Thyroid gland (tissue), 4 donors: ENCODE measurements at regions of chr11 and their contacts with region 1.

Region 1: GRCh38 chr11:47941907-47942558 is 38.3 kb upstream of the PTPRJ start:
- DNase-seq: peak in 1 of 2 donors; percentile 17
- H3K4me3 ChIP-seq: no peak overlapping the region
- H3K27ac ChIP-seq: no peak overlapping the region
- H3K4me1 ChIP-seq: peaks cover 31 to 46% of the 10 kb centered on the region in 2 donors
- H3K27me3 ChIP-seq: no peaks in the 10 kb centered on the region
- CTCF ChIP-seq: no peak
- POLR2A ChIP-seq: no peak

Region 2: DNA sequence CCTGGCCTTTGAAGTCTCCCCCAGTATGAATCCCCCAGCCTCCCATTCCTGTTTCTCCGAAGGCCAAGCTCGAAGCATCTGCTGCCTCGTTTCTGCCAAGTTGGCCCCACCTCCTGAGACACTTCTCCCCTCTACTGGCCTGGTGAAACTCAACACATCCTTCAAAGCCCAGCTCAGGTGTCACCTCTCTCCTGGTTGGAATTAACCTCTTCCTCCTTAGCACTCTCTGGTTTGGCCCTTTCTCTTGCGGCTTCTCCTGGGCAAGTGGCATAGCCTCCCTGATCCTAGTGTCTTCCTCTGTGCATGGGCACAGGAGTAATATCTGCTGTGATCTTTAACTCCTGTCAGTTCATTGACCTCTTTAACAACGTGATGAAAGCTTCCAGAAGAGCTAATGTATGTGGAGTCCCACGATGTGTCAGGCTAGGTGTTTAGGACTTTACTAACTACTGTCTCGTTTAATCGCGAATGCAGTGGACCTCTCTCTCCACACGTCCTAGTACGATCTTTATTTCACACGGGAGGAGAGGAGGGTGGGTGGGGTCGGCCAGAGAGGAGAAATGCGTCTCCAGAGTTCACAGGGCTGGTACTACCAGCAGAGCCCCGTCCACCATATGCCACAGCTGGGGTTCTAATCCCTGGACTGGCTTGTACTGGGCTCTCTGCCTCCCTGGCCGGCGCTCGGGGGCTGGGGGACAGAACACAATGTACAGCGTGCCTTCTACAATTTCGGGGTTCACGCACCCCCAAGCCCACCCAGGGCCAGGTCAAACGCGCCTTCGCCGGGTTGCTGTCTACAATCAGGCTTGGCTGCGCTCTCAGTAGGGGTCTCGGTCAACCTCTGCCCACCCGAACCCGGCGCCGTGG is 37.6 kb after region 1 on chr11:
- intact Hi-C with region 1: loop called (anchors 5 kb)
- DNase-seq: peak; percentile 63 to 64
- H3K4me3 ChIP-seq: peak overlapping the region in 2 of 3 donors; percentile 12 to 85
- H3K27ac ChIP-seq: peak overlapping the region; percentile 97 to 99 (median 98)
- H3K4me1 ChIP-seq: peaks cover 38 to 44% of the 10 kb centered on the region in 2 donors
- H3K27me3 ChIP-seq: no peaks in the 10 kb centered on the region
- CTCF ChIP-seq: no peak
- POLR2A ChIP-seq: peak in 1 of 2 donors; percentile 40

Region 3: DNA sequence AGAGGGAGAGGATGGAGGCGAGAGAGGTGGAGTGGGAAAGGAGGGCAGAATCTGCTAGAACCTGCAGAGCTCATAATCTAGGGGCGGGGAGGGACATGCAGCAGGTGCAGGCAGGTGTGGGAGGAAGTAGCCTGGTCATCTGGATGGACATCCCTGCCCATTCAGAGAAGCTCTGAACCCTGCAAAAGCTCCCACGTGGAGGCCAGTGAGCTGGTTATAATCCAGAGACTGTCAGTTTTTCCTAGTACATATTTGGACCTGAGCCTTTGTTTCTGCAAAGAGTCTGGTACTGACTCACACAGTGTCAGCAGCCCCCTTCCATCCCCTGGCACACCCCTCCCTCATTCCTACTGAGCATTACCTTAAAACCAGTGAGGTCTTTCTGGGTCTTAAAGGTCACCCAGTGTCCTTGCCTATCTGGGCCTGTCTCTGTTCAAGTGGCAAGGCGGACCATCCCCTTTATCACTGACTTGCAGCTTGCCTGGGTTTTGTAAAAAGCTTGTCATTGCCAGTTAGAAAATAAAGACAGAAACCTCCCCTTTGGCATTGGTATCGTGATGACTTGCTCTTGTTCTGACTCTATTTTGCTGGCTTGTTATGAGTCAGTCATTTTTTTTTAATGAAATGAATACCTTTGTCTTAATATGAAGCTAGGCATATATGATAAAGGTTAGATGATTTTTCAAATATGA is 64.4 kb after region 1 on chr11:
- intact Hi-C with region 1: no loop called
- DNase-seq: peak in 1 of 2 donors; percentile 45
- H3K4me3 ChIP-seq: no peak overlapping the region
- H3K27ac ChIP-seq: peak overlapping the region; percentile 32 to 93 (median 82)
- H3K4me1 ChIP-seq: peaks cover 71 to 87% of the 10 kb centered on the region in 2 donors
- H3K27me3 ChIP-seq: no peaks in the 10 kb centered on the region
- CTCF ChIP-seq: no peak
- POLR2A ChIP-seq: no peak

Region 4: GRCh38 chr11:48109046-48109666 is 167.1 kb after region 1 on chr11:
- intact Hi-C with region 1: loop called (anchors 5 kb)
- DNase-seq: no peak
- H3K4me3 ChIP-seq: no peak overlapping the region
- H3K27ac ChIP-seq: peak overlapping the region; percentile 70 to 78 (median 75)
- H3K4me1 ChIP-seq: peaks cover 12 to 27% of the 10 kb centered on the region in 2 donors
- H3K27me3 ChIP-seq: no peaks in the 10 kb centered on the region
- CTCF ChIP-seq: peak in 4 of 6 experiments; percentile 33 to 52 (median 42)
- POLR2A ChIP-seq: no peak